ENCODE measurements at regions of chrX and their contacts with region 1.

Region 1: DNA sequence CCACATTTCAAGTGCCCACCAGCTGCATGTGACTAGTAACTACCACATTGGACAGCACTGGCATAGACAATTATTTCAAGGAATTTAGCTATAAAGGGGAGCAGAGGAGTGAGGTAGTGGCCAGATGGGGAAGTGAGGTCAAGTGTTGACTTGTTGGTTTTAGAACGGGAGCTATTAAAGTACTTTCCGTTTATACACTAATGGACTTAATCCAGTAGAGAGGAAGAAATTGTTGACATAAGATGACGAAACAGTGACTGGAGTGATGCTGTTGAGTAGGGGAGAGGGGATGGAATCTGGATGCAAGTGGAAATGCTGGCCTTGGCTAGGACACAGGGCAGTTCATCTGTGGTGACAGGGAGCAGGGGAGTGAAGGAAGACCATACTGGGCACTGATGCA is 154.4 kb downstream of the AMMECR1 start:
- DNase-seq: no peak
- ATAC-seq: no peak

Region 2: GRCh38 chrX:110002300-110003166 is 161.0 kb before region 1 on chrX and contains the start of gene TMEM164:
- intact Hi-C with region 1: no loop called
- DNase-seq: peak; percentile 91
- ATAC-seq: peak; percentile 94
- total RNA-seq, gene TMEM164: 60.4 TPM

Region 3: DNA sequence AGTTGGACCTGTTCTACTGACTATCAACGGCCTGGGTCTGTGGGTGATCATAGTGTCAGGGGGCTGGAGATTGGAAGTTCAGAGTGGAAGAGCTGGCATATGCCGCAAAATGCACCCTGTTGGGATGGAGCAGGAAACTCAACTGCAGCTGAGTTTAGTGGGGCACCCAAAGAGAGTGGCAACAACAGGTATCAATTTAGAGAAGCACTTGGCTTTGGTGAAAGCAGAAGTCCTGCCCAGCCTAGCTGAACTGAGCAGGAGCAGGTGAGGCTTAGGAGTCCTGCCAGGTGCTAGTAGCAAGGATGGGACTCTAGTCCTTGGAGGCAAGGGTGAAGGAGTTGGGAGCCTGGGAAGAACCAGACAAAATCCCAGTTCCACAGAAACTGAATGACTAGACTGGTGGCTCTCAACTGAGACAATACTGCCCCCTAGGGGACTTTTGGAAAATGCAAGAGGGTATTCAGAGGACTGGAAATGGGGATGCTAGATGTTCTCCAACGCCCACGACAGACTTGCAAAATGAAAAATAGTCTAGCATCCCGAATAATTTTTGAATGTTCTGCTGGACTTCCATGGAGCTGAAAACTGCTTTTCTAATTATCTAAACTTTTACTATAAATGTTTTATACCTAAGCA is 244.5 kb after region 1 on chrX:
- intact Hi-C with region 1: loop called (anchors 5 kb)
- DNase-seq: no peak
- ATAC-seq: peak; percentile 63

Measured in left ventricle myocardium superior (tissue), 1 donor.